A673 (cell line): ENCODE measurements at regions of chr19 and their contacts with region 1.

Region 1: DNA sequence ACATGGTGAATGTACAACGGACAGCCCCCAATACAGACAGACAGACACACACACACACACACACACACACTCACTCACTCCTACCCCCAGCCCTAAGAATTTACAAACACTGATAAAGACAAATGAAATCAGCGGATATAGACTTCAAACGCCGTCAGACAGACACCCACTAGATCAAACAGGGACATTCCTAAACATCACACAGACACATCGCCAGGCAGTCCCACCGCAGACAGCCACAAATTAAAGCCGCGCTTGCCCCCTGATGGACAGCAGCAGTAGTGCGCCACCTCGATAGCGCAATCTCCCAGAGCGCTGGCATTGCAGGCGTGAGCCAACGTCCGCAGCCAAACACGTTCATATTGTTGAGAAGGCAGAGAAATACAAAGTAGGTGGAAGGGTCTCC is 24.7 kb upstream of the ADGRE1 start:
- DNase-seq: peak; percentile 94
- H3K4me3 ChIP-seq: peak overlapping the region; percentile 26
- H3K27ac ChIP-seq: no peak overlapping the region
- H3K4me1 ChIP-seq: no peaks in the 10 kb centered on the region
- H3K27me3 ChIP-seq: no peaks in the 10 kb centered on the region
- CTCF ChIP-seq: peak; percentile 98

Region 2: GRCh38 chr19:6378041-6378440 is 484.6 kb before region 1 on chr19:
- CTCF ChIA-PET with region 1: no interaction called
- POLR2A ChIA-PET with region 1: no interaction called
- intact Hi-C with region 1: loop called (anchors 5 kb)
- DNase-seq: no peak
- H3K4me3 ChIP-seq: no peak overlapping the region
- H3K27ac ChIP-seq: no peak overlapping the region
- H3K4me1 ChIP-seq: peaks cover 8% of the 10 kb centered on the region
- H3K27me3 ChIP-seq: no peaks in the 10 kb centered on the region
- CTCF ChIP-seq: no peak

Region 3: GRCh38 chr19:6516659-6517291 is 345.9 kb before region 1 on chr19:
- CTCF ChIA-PET with region 1: interaction called, 10 read pairs
- POLR2A ChIA-PET with region 1: interaction called, 3 read pairs
- intact Hi-C with region 1: loop called (anchors 1 kb)
- DNase-seq: peak; percentile 97
- H3K4me3 ChIP-seq: peak overlapping the region; percentile 64
- H3K27ac ChIP-seq: peak overlapping the region; percentile 72
- H3K4me1 ChIP-seq: peaks cover 4% of the 10 kb centered on the region
- H3K27me3 ChIP-seq: no peaks in the 10 kb centered on the region
- CTCF ChIP-seq: peak; percentile 99

Region 4: GRCh38 chr19:6632002-6632621 is 230.6 kb before region 1 on chr19:
- CTCF ChIA-PET with region 1: interaction called, 7 read pairs
- POLR2A ChIA-PET with region 1: no interaction called
- intact Hi-C with region 1: loop called (anchors 1 kb)
- DNase-seq: peak; percentile 86
- H3K4me3 ChIP-seq: no peak overlapping the region
- H3K27ac ChIP-seq: no peak overlapping the region
- H3K4me1 ChIP-seq: no peaks in the 10 kb centered on the region
- H3K27me3 ChIP-seq: no peaks in the 10 kb centered on the region
- CTCF ChIP-seq: peak; percentile 93

Region 5: DNA sequence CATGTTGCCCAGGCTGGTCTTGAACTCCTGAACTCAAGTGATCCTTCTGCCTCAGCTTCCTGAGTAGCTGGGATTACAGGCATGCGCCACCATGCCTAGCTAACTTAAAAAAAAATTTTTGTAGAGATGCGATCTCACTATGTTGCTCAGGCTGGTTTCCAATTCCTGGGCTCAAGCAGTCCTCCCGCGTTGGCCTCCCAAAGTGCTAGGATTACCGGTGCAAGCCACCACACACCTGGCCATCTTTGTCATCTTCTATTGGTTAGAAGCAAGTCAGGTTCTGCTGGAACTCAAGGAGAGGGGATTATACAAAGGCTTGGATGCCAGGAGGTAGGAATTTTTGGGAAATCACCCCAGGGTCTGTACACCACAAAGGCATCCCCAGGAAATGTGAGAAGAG is 217.9 kb before region 1 on chr19:
- CTCF ChIA-PET with region 1: no interaction called
- POLR2A ChIA-PET with region 1: no interaction called
- intact Hi-C with region 1: no loop called
- DNase-seq: no peak
- H3K4me3 ChIP-seq: no peak overlapping the region
- H3K27ac ChIP-seq: no peak overlapping the region
- H3K4me1 ChIP-seq: no peaks in the 10 kb centered on the region
- H3K27me3 ChIP-seq: no peaks in the 10 kb centered on the region
- CTCF ChIP-seq: no peak

Region 6: DNA sequence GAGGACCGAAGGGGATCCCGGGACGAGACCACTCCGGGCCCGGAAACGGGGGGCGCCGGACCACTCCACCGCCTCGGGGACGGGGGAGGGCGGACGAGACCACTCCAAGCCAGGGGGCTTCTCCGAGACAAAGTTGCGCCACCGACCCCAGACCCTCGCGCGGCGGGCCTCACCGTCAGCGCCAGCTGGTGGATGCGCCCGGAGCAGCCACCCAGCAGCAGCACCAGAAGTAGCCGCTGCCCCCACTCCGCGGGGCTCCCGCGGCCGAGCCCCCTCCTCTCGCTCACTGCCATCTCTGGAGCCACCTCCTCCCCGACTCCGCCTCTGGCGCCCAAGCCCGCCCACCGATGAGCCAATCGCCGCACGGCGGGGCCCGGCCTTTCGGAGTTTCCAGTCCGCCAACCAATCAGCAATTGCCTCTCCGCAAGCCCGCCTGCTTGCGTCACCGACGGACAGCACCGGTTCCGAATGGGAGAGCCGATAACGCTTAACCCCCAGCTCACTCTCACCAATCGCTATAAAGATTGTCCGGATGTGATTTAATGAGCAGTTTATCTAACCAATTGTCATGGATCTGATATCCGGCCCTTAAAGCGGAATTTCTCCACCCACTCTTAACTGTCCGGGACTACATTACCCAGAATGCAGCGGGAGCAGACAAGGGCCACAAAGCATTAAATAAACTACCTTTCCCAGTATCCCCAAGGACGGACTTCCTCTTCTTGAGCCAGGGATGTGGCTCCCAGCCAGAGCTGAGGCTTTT is 125.2 kb before region 1 on chr19 and contains the start of gene GPR108:
- CTCF ChIA-PET with region 1: interaction called, 44 read pairs
- POLR2A ChIA-PET with region 1: no interaction called
- intact Hi-C with region 1: loop called (anchors 1 kb)
- DNase-seq: peak; percentile 100
- H3K4me3 ChIP-seq: peak within 1 kb of the TSS; percentile 63
- H3K27ac ChIP-seq: peak within 1 kb of the TSS; percentile 98
- H3K4me1 ChIP-seq: peaks cover 35% of the 10 kb centered on the region
- H3K27me3 ChIP-seq: no peaks in the 10 kb centered on the region
- CTCF ChIP-seq: no peak
- total RNA-seq, gene GPR108: 36.4 and 37.4 TPM in 2 replicates

Region 7: DNA sequence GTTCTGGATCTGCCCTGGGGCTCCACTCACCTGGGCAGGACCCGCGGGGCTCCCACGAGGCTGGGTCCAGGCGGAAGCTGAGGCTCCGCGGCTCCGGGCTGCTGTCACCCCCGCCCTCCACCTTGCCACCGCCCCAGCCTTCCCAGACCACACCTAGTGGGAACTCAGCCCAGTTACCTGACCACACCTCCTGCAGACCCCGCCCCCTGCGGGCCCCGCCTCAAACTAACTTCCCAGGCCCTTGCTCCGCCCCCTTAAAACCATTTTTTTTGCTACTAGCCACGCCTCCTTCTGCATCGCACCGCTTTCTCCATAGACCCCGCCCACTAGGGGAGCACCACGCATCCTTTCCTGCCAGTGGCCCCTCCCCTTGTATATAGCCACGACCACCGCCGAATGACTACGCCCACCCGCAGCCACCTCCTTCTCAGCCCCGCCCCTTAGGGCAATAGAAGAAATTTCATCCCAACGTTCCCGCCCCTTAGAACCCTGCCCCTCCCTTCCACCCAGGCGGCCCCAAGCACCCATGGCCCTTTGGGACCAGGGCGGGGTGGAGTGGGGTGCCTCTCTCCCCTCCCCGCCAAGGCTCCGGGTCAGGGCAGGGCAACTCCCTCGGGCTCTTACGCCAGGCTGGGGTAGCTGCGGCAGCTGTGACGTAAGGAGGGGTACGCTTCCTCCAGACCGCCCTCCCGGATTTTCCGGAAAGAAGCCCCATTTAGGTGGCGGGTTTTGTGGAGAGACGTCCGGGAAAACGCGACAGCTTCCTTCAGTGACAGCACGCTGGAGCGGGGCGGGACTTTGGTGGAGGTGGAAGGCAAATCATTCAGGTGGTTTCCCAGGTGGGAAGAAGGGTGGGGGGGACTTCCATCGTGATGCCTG is 95.1 kb before region 1 on chr19 and contains the start of gene SH2D3A:
- CTCF ChIA-PET with region 1: interaction called, 3 read pairs
- POLR2A ChIA-PET with region 1: interaction called, 10 read pairs
- intact Hi-C with region 1: no loop called
- DNase-seq: peak; percentile 95
- H3K4me3 ChIP-seq: peak within 1 kb of the TSS; percentile 52
- H3K27ac ChIP-seq: peak within 1 kb of the TSS; percentile 49
- H3K4me1 ChIP-seq: peaks cover 11% of the 10 kb centered on the region
- H3K27me3 ChIP-seq: no peaks in the 10 kb centered on the region
- CTCF ChIP-seq: no peak
- total RNA-seq, gene SH2D3A: 0.95 and 1.7 TPM in 2 replicates